Sigmoid colon (tissue), 7 donors: ENCODE measurements at regions of chr6 and their contacts with region 1.

Region 1: DNA sequence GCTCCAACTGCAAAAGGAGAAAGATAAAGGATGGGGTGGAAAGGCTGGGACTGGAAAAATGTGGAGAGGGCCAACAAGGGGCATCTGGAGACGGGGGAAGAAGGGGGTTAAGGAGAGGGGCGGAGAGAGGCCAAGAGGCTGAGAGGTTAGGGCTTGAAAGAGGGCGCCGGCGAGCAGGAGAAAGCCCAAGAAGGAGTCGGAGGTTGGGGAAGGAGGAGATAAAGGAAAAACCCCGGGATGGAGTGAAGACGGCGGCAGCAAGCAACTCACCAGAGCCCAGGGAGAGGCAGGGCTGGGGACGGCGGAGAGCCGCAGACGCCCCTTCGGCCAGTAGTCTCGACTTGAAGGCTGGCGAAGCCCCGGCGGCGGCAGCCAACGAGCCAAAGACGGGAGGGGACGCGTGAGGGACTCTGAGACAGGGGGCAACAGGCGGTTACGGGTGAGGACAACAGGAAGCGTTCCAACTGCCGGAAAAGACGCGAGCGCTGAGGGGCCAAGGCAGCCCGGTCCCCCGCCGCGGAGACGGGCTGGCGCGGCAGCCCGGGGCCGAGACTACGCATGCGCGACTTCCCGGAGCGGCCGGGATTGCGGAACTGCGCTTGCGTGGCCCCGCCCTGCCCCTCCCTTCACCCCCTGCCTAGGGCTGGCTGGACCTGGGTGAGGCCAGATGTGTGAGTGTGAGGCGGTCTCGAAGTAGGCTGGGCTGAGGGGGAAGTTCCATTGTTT is at the start of gene STK38:
- DNase-seq: peak; percentile 96
- H3K4me3 ChIP-seq: peak within 1 kb of the TSS; percentile 90 to 99 (median 97)
- H3K27ac ChIP-seq: peak within 1 kb of the TSS; percentile 95 to 100 (median 99)
- H3K4me1 ChIP-seq: peaks cover 0 to 49% (median 41%) of the 10 kb centered on the region in 4 donors
- H3K27me3 ChIP-seq: no peaks in the 10 kb centered on the region
- CTCF ChIP-seq: no peak
- EP300 ChIP-seq: no peak
- POLR2A ChIP-seq: peak; percentile 97 to 98
- total RNA-seq, gene STK38: 25.8 to 46.3 (median 33.1) TPM

Region 2: DNA sequence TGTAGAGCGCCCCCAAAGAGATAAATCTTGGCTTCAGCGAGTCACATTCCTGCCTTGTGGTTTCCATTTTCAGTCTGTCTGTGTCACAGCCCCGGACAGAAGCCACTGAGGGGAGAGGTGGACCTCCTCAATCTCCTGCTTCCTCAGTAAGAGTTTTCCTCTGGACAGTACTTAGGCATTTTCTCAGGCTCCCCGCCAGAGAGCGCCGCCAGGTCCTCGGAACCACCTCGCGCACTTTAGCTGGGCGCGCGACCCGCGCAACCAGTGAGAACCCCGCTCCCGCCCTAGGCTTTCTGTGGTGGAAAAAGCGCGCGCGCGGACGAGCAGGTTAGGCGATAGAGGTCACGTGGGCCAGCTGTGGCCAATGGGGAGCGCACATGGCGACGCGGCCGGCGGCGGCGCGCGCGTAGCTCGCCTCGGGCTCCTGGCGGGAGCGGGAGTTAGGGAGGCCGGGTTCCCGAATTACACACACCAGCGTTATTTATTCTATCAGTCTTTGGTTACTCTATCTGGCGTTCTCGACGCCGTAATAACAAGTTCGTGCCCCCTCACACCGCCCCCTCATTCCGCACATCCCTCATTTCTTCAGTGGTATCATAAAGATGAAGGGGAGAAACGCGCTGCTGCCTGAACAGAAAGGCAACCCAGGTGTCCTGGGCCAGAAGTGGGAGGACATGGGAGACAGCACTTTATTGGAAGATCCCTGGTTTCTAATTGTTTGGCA is 123.8 kb before region 1 on chr6:
- intact Hi-C with region 1: loop called (anchors 2 kb)
- DNase-seq: peak; percentile 99
- H3K4me3 ChIP-seq: peak overlapping the region; percentile 36 to 61 (median 50)
- H3K27ac ChIP-seq: peak overlapping the region; percentile 86 to 90 (median 89)
- H3K4me1 ChIP-seq: peaks cover 0 to 8% (median 7%) of the 10 kb centered on the region in 4 donors
- H3K27me3 ChIP-seq: no peaks in the 10 kb centered on the region
- CTCF ChIP-seq: peak; percentile 29 to 57 (median 51)
- EP300 ChIP-seq: no peak
- POLR2A ChIP-seq: peak; percentile 70 to 80

Region 3: GRCh38 chr6:36442671-36443470 is 104.2 kb before region 1 on chr6 and contains the starts of genes KCTD20 and PXT1:
- intact Hi-C with region 1: loop called (anchors 5 kb)
- DNase-seq: peak; percentile 95
- H3K4me3 ChIP-seq: peak within 1 kb of the TSS; percentile 87 to 99 (median 94)
- H3K27ac ChIP-seq: peak within 1 kb of the TSS; percentile 97 to 99 (median 98)
- H3K4me1 ChIP-seq: peaks cover 2 to 41% (median 37%) of the 10 kb centered on the region in 4 donors
- H3K27me3 ChIP-seq: no peaks in the 10 kb centered on the region
- CTCF ChIP-seq: no peak
- EP300 ChIP-seq: peak in 2 of 4 donors; percentile 19 to 69
- POLR2A ChIP-seq: peak; percentile 32 to 69
- total RNA-seq, gene KCTD20: 48.5 to 71.3 (median 50.8) TPM
- total RNA-seq, gene PXT1: not detected

Region 4: DNA sequence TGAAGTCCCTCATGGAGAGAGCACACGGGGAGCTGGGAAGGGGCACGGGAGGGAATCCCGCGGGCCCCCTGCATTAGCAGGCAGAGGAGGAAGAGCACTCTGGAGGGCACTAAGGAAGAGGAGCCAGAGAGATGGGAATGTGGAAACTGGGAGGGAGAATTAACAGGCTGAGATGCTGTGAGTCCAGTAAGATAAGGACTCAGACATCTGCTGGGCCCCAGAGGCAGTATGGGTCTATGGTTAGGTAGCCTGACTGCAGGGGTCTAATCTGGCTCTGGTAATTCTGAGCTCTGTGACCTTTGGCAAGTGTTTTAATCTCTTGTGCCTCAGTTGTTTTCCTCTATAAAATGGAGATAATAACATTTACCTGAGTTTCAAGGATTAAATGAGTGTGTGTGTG is 31.3 kb after region 1 on chr6:
- intact Hi-C with region 1: loop called (anchors 2 kb)
- DNase-seq: no peak
- H3K4me3 ChIP-seq: no peak overlapping the region
- H3K27ac ChIP-seq: peak overlapping the region; percentile 80 to 90 (median 82)
- H3K4me1 ChIP-seq: peaks cover 0 to 40% (median 23%) of the 10 kb centered on the region in 4 donors
- H3K27me3 ChIP-seq: no peaks in the 10 kb centered on the region
- CTCF ChIP-seq: no peak
- EP300 ChIP-seq: no peak
- POLR2A ChIP-seq: no peak

Region 5: GRCh38 chr6:36594029-36594815 is 47.1 kb after region 1 on chr6 and contains the start of gene SRSF3:
- intact Hi-C with region 1: loop called (anchors 1 kb)
- DNase-seq: peak; percentile 99
- H3K4me3 ChIP-seq: peak within 1 kb of the TSS; percentile 71 to 85 (median 81)
- H3K27ac ChIP-seq: peak within 1 kb of the TSS; percentile 92 to 98 (median 96)
- H3K4me1 ChIP-seq: peaks cover 0 to 39% (median 34%) of the 10 kb centered on the region in 4 donors
- H3K27me3 ChIP-seq: no peaks in the 10 kb centered on the region
- CTCF ChIP-seq: peak in 3 of 4 experiments; percentile 40 to 51 (median 43)
- EP300 ChIP-seq: peak in 2 of 4 donors; percentile 3 to 11
- POLR2A ChIP-seq: peak; percentile 100
- total RNA-seq, gene SRSF3: 101 to 168 (median 122) TPM

Region 6: GRCh38 chr6:36692220-36692619 is 145.1 kb after region 1 on chr6:
- intact Hi-C with region 1: no loop called
- DNase-seq: peak; percentile 56
- H3K4me3 ChIP-seq: no peak overlapping the region
- H3K27ac ChIP-seq: no peak overlapping the region
- H3K4me1 ChIP-seq: peaks cover 0 to 8% (median 2%) of the 10 kb centered on the region in 4 donors
- H3K27me3 ChIP-seq: no peaks in the 10 kb centered on the region
- CTCF ChIP-seq: no peak
- EP300 ChIP-seq: no peak
- POLR2A ChIP-seq: no peak